Activated CD4-positive, alpha-beta T cell treated with anti-CD3 and anti-CD28 coated beads for 36 hours (primary cell): ENCODE measurements at regions of chr3 and their contacts with region 1.

Region 1: GRCh38 chr3:38346587-38347410 is at the start of gene XYLB:
- DNase-seq: peak; percentile 89
- ATAC-seq: peak; percentile 98
- H3K4me3 Mint-ChIP-seq: peak within 1 kb of the TSS; percentile 70
- H3K27ac Mint-ChIP-seq: no peak within 1 kb of the TSS
- H3K4me1 Mint-ChIP-seq: peaks cover 2% of the 10 kb centered on the region
- H3K27me3 Mint-ChIP-seq: peaks cover 2% of the 10 kb centered on the region
- total RNA-seq, gene XYLB: 5.0 to 5.3 TPM

Region 2: DNA sequence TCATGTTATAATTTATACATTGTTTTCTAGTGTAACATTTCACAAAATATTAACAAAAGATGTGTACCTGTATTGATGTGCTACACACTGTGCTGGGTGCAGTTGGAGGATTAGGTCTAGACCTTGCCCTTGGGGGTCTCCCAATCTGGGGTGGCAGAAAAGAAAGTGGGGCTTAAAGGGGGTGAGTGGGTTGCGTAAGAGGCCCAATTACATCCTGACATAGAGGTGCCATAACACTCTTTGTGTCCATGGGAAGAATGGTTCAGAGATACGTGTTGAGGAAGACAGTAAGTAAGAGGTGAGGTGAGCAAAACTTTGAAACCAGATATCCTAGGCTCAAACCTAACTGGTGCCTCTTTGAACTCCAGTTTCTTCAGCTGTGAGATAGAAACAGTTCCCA is 276.8 kb before region 1 on chr3:
- CTCF ChIA-PET with region 1: no interaction called
- POLR2A ChIA-PET with region 1: no interaction called
- intact Hi-C with region 1: no loop called
- DNase-seq: no peak
- ATAC-seq: no peak
- H3K4me3 Mint-ChIP-seq: no peak overlapping the region
- H3K27ac Mint-ChIP-seq: no peak overlapping the region
- H3K4me1 Mint-ChIP-seq: no peaks in the 10 kb centered on the region
- H3K27me3 Mint-ChIP-seq: no peaks in the 10 kb centered on the region

Region 3: GRCh38 chr3:38117748-38118420 is 228.9 kb before region 1 on chr3:
- CTCF ChIA-PET with region 1: interaction called, 4 read pairs
- POLR2A ChIA-PET with region 1: no interaction called
- intact Hi-C with region 1: loop called in 1 of 2 experiments (anchors 5 kb)
- DNase-seq: peak; percentile 86
- ATAC-seq: peak; percentile 91
- H3K4me3 Mint-ChIP-seq: no peak overlapping the region
- H3K27ac Mint-ChIP-seq: no peak overlapping the region
- H3K4me1 Mint-ChIP-seq: no peaks in the 10 kb centered on the region
- H3K27me3 Mint-ChIP-seq: no peaks in the 10 kb centered on the region

Region 4: DNA sequence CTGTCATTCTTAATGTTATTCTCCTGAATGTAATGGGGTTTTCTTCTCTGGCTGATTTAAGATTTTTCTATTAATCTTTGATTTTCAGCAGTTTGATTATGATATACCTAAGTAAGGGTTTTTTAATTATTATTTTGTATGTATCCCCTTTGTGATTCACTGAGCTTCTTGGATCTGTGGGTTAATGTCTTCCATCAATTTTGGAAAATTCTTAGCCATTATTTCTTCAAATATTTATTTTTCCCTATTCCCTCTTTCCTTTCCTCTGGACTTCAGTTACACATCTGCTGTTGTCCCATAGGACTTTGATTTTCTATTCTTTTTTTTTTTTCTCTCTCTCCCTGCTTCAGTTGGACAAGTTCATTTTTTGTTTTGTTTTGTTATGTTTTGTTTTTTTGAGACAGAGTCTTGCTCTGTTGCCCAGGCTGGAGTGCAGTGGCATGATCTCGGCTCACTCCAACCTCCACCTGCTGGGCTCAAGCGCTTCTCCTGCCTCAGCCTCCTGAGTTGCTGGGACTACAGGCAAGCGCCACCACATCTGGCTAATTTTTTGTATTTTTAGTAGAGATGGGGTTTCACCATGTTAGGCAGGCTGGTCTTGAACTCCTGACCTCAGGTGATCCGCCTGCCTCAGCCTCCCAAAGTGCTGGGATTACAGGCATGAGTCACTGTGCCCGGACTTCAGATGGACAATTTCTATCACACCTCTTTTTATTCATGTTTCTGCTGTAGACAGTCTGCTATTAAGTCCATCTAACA is 40.4 kb after region 1 on chr3:
- CTCF ChIA-PET with region 1: no interaction called
- POLR2A ChIA-PET with region 1: no interaction called
- intact Hi-C with region 1: no loop called
- DNase-seq: no peak
- ATAC-seq: no peak
- H3K4me3 Mint-ChIP-seq: no peak overlapping the region
- H3K27ac Mint-ChIP-seq: no peak overlapping the region
- H3K4me1 Mint-ChIP-seq: no peaks in the 10 kb centered on the region
- H3K27me3 Mint-ChIP-seq: no peaks in the 10 kb centered on the region

Region 5: GRCh38 chr3:38453075-38453912 is 106.5 kb after region 1 on chr3 and contains the start of gene ACVR2B:
- CTCF ChIA-PET with region 1: no interaction called
- POLR2A ChIA-PET with region 1: no interaction called
- intact Hi-C with region 1: loop called in 1 of 2 experiments (anchors 1 kb)
- DNase-seq: peak; percentile 85
- ATAC-seq: peak; percentile 71
- H3K4me3 Mint-ChIP-seq: peak within 1 kb of the TSS; percentile 87
- H3K27ac Mint-ChIP-seq: peak within 1 kb of the TSS; percentile 81
- H3K4me1 Mint-ChIP-seq: peaks cover 9% of the 10 kb centered on the region
- H3K27me3 Mint-ChIP-seq: peaks cover 2% of the 10 kb centered on the region
- total RNA-seq, gene ACVR2B: 5.7 to 6.9 TPM

Region 6: GRCh38 chr3:38479431-38480092 is 132.8 kb after region 1 on chr3:
- CTCF ChIA-PET with region 1: interaction called, 27 read pairs
- POLR2A ChIA-PET with region 1: no interaction called
- intact Hi-C with region 1: loop called (anchors 1 kb)
- DNase-seq: peak; percentile 64
- ATAC-seq: peak; percentile 78
- H3K4me3 Mint-ChIP-seq: no peak overlapping the region
- H3K27ac Mint-ChIP-seq: no peak overlapping the region
- H3K4me1 Mint-ChIP-seq: peaks cover under 1% of the 10 kb centered on the region
- H3K27me3 Mint-ChIP-seq: no peaks in the 10 kb centered on the region